HAP-1 (cell line): ENCODE measurements at regions of chr4 and their contacts with region 1.

Region 1: DNA sequence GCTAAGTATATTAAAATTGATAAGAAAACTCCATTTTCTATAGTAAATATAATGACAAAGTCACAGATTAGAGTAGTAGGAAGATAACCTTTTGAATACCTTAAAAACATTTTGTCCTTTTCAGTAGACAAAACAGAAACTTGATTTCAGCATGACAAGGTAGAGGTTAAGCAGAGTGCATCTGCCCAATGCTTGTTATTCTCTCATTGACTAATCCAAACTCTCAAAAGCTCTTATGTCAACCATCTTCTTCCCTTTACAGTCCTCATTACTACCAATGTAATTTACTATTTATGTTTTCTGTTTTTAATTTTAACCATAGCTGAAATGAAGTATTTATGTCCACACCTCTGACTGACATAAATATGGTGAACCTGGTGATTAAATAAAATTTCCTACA is 11.1 kb downstream of the NIPAL1 start:
- DNase-seq: no peak
- H3K4me3 ChIP-seq: no peak overlapping the region
- H3K4me1 ChIP-seq: peaks cover 33% of the 10 kb centered on the region
- H3K27me3 ChIP-seq: no peaks in the 10 kb centered on the region

Region 2: DNA sequence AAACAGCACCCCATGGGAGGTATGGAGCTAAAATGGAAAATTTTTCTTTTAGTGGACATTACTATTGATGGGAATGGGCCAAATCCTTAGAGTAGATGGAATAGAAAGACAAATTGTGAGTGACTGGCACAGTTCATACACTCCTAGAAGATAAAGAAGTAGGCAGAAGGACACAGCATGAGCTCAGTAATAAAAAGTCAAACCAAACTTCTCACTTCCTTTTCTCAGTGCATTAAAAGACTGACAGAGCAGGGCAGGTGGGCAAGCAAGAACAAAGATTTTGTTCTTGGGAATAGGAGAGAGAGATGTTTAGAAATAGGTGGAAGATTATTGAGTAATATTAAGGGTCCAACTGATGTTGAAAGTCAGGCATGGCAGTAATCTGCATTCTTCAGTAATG is 410.0 kb before region 1 on chr4:
- in situ Hi-C with region 1: no loop called
- DNase-seq: no peak
- H3K4me3 ChIP-seq: no peak overlapping the region
- H3K4me1 ChIP-seq: no peaks in the 10 kb centered on the region
- H3K27me3 ChIP-seq: no peaks in the 10 kb centered on the region

Region 3: GRCh38 chr4:47704693-47705325 is 322.8 kb before region 1 on chr4:
- in situ Hi-C with region 1: no loop called
- DNase-seq: peak; percentile 47 to 63
- H3K4me3 ChIP-seq: no peak overlapping the region
- H3K4me1 ChIP-seq: no peaks in the 10 kb centered on the region
- H3K27me3 ChIP-seq: peaks cover 9% of the 10 kb centered on the region

Region 4: DNA sequence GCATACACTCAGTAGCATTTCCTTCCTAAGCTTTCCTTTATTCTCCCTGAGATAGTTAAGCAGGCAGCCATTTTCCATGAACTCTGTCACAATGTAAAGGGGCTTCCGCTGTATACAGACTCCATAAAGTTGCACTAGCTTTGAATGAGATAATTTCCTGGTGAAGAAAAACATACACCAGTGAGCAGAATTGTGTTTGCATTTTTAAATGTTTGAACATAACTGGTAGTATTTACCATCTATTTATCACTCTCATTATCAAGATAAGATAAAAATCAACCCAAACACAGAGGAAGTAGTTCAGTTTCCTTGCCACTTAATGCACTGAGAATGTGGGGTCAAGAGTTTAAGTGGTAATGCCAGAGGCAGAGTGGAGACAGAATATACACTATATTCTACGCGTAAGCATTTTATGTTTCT is 52.3 kb after region 1 on chr4:
- in situ Hi-C with region 1: loop called (anchors 10 kb)
- DNase-seq: no peak
- H3K4me3 ChIP-seq: no peak overlapping the region
- H3K4me1 ChIP-seq: no peaks in the 10 kb centered on the region
- H3K27me3 ChIP-seq: no peaks in the 10 kb centered on the region; the same call in 1 of the 2 replicates